ENCODE measurements at regions of chr1 and their contacts with region 1.

Region 1: DNA sequence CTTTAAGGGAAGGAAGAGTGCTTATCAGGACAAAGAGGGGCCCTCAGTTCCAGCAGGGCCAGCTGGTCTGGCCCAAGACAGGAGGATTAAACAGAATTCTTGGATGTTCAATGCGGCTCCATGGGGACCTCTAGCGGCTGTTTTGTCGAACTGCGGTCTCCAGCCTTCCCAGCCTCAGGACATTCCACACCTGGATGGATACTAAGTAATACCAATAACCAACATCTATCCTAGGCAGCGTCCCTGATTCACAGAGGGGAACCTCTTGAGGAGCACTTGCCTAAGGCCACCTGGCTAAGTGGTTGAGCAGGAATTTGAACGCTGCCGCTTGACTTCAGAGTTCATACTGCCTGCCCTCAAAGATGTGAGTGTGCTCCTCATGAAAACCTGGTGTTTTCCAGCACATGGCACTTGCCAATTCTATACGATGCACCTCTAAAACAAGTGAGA is 15.5 kb upstream of the CD247 start:
- DNase-seq: peak; percentile 54
- ATAC-seq: peak; percentile 83
- H3K4me3 ChIP-seq: no peak overlapping the region
- H3K27ac ChIP-seq: no peak overlapping the region
- H3K4me1 ChIP-seq: peaks cover 28% of the 10 kb centered on the region
- H3K27me3 ChIP-seq: no peaks in the 10 kb centered on the region
- CTCF ChIP-seq: peak; percentile 85
- EP300 ChIP-seq: no peak
- POLR2A ChIP-seq: no peak
- RAD21 ChIP-seq: peak; percentile 72

Region 2: DNA sequence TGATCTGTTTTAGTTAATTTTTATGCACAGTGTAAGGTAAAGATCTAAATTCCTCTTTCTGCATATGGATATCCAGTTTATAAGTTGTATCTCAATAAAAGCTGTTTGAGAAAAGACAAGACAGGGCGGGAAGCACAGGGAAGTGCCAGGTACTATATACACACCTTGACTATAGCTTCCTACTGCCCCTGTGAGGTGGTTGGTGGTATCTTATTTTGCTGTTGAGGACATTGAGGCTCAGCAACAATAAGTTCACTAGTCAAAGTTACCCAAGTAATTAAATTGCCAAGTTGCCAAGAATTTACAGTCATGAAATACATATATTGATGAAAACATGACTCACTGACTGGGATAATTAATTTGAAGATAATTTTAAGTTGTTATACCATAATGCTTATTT is 124.7 kb before region 1 on chr1:
- CTCF ChIA-PET with region 1: no interaction called
- POLR2A ChIA-PET with region 1: no interaction called
- in situ Hi-C with region 1: loop called (anchors 10 kb)
- intact Hi-C with region 1: no loop called
- DNase-seq: peak; percentile 24
- ATAC-seq: peak; percentile 86
- H3K4me3 ChIP-seq: no peak overlapping the region
- H3K27ac ChIP-seq: no peak overlapping the region
- H3K4me1 ChIP-seq: no peaks in the 10 kb centered on the region
- H3K27me3 ChIP-seq: no peaks in the 10 kb centered on the region
- CTCF ChIP-seq: peak; percentile 48
- EP300 ChIP-seq: no peak
- POLR2A ChIP-seq: no peak
- RAD21 ChIP-seq: no peak

Region 3: DNA sequence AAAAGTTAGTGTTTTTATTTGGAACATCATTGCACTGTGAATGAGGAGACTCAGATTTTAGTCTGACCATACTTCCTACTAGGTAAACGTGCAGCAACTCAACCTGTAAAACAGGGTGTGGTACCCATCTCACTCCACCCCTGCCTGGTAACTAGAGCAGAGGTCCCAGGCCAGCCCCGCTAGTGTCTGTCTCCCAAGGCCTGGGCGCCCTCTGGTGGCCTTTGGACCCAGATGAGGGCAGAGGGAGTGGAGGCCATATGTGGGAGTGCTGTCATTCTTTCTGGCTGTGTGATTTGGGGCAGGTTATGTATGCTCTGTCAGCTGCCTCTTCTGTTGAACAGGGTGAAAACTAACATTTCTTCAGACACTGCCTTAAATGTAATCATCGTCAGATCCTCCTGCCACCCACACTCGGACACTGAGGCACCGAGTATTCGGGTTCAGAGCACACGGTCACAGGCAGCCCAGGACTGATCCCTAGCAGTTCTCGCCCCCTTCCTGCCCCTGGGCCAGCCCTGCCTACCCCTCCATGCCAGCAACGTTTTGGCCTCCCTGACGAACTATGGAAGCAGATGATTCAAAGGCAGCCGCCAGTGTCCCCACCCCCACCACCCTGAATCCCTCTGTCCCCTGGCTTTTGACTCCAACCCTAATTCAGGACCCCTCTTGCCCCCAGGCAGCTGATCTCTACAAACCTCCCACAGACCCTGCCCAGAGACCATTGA is 91.6 kb before region 1 on chr1:
- CTCF ChIA-PET with region 1: no interaction called
- POLR2A ChIA-PET with region 1: no interaction called
- in situ Hi-C with region 1: no loop called
- intact Hi-C with region 1: loop called (anchors 2 kb)
- DNase-seq: peak; percentile 70
- ATAC-seq: peak; percentile 95
- H3K4me3 ChIP-seq: peak overlapping the region in 1 of 3 experiments; percentile 36; a peak in 1 of 6 replicates
- H3K27ac ChIP-seq: no peak overlapping the region
- H3K4me1 ChIP-seq: peaks cover 20% of the 10 kb centered on the region
- H3K27me3 ChIP-seq: peaks cover 0 to 32% of the 10 kb centered on the region in 2 experiments; a peak in 2 of 5 replicates
- CTCF ChIP-seq: peak; percentile 97
- EP300 ChIP-seq: no peak
- POLR2A ChIP-seq: no peak
- RAD21 ChIP-seq: peak; percentile 87